ENCODE measurements at regions of chr12 and their contacts with region 1.

Region 1: GRCh38 chr12:14884458-14884878 is 1.2 kb downstream of the MGP start:
- DNase-seq: peak; percentile 73 to 89
- ATAC-seq: peak; percentile 63 to 81 (median 75)
- H3K4me3 ChIP-seq: peak overlapping the region; percentile 2 to 61 (median 46)
- H3K27ac ChIP-seq: peak overlapping the region; percentile 41 to 89 (median 76)
- H3K4me1 ChIP-seq: peaks cover 0 to 43% (median 26%) of the 10 kb centered on the region in 9 donors
- H3K27me3 ChIP-seq: no peaks in the 10 kb centered on the region
- CTCF ChIP-seq: no peak

Region 2: DNA sequence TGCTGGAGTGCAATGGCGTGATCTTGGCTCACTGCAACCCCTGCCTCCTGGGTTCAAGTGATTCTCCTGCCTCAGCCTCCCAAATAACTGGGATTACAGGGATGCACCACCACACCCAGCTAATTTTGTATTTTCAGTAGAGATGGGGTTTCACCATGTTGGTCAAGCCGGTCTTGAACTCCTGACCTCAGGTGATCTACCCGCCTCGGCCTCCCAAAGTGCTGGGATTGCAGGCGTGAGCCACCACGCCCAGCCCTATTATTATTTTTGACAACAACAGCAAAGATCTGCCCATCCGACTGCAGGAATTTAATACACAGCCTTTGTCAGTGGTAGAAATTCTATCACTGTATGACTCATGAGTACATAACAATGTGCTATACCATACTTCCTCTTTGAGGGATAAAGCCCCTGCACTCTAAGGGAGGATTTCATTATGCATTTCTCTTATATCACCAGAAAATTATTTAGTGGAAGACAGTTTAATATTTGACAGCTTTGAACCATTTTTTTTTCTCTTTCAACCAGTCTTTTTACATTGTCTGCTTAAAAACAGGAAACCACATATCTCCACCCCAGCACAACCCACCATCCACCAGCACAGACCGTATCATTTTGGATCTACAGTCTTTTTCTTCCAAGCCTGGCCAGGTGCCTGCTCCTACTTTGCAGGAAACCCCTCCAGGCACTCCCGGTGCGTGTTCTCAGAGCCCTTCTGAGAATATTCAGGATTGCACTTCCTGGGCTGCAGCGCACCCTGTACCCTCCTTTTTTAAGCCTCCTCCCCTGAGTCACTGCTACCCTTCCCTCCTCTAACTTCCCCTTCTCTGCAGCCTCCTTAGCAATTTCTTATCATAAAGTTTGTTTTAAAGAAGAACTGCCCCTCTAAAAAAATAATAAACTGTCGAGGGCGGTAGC is 76.3 kb after region 1 on chr12:
- intact Hi-C with region 1: loop called in 3 of 10 experiments (anchors 2 to 5 kb)
- DNase-seq: peak; percentile 42 to 60
- ATAC-seq: peak; percentile 50 to 90 (median 78)
- H3K4me3 ChIP-seq: peak overlapping the region; percentile 13 to 73 (median 52)
- H3K27ac ChIP-seq: peak overlapping the region; percentile 76 to 95 (median 84)
- H3K4me1 ChIP-seq: peaks cover 0 to 86% (median 59%) of the 10 kb centered on the region in 9 donors
- H3K27me3 ChIP-seq: no peaks in the 10 kb centered on the region
- CTCF ChIP-seq: no peak

Region 3: DNA sequence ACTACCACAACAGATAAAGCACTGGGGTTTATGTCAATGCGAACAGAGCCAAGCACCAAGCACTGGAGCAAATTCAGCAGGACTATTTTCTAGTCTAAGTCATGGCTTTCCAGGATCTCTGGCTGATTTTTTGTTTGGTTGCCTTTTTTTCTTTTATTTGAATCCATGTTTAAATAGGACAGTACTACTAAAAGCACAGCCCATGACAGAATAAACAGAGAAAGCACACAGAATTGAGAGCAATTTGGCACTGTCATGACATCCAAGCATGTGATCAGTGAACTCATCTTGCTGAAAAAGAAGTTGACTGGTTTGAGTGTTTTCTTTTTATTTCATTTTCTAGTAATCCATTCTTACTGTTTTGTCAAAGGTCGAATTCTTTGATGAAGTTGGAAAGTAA is 359.9 kb after region 1 on chr12:
- intact Hi-C with region 1: no loop called
- DNase-seq: no peak
- ATAC-seq: no peak
- H3K4me3 ChIP-seq: no peak overlapping the region
- H3K27ac ChIP-seq: no peak overlapping the region
- H3K4me1 ChIP-seq: peaks cover 0 to 6% (median 0%) of the 10 kb centered on the region in 9 donors
- H3K27me3 ChIP-seq: peaks cover 0 to 14% (median 0%) of the 10 kb centered on the region in 7 donors
- CTCF ChIP-seq: no peak

Measured in heart right ventricle (tissue), 16 donors.